Activated CD4-positive, alpha-beta memory T cell treated with anti-CD3 and anti-CD28 coated beads, Interleukin-2, amount 10 ng/mL, durations not matched to agents 7 days and 5 days (primary cell): ENCODE measurements at regions of chr19 and their contacts with region 1.

Region 1: DNA sequence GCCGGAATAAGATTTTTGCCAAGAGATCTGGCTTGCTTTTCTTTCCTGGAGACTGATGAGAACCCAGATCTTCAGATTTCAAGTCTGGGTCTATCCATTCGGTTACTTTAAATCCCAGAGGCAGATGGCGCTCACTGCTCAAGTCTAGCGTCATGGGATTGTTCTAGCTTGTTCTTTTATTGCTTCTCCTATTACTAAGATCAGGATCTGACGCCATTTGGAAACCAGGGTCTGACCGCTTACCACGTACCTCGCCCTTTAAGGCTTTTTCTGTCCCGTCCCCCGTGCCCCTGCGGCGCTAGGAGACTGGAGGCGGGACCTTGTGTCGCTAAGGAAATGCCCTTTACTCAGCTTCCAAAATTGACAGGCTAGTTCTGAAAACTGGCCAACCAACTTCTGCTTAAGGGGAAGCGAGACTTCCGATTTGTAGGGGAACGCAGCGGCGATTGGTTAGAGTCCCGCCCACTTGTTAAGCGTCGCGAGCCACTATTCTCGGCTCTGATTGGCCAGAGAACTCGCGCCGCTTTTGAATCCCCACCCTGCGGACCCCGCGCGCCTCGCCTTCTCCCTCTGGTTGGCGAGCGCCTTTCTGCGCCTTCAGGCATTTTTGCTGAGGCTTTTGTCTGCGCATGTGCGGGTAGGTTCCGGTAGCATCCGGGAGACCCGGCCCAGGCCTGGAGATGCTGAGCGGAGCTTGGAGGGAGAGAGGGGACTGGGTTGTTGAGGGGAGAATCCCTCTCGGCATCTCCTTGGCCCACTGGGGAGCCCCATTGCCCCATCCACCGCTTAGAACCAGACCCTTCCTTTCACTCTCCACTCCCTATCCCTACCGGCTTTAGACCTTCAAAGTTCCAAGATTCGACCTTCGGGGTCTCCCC is 3.8 kb upstream of the C19orf84 start:
- DNase-seq: peak; percentile 98
- H3K4me3 Mint-ChIP-seq: peak overlapping the region; percentile 86
- H3K27ac Mint-ChIP-seq: peak overlapping the region; percentile 98
- H3K4me1 Mint-ChIP-seq: peaks cover 54% of the 10 kb centered on the region
- H3K27me3 Mint-ChIP-seq: no peaks in the 10 kb centered on the region

Region 2: DNA sequence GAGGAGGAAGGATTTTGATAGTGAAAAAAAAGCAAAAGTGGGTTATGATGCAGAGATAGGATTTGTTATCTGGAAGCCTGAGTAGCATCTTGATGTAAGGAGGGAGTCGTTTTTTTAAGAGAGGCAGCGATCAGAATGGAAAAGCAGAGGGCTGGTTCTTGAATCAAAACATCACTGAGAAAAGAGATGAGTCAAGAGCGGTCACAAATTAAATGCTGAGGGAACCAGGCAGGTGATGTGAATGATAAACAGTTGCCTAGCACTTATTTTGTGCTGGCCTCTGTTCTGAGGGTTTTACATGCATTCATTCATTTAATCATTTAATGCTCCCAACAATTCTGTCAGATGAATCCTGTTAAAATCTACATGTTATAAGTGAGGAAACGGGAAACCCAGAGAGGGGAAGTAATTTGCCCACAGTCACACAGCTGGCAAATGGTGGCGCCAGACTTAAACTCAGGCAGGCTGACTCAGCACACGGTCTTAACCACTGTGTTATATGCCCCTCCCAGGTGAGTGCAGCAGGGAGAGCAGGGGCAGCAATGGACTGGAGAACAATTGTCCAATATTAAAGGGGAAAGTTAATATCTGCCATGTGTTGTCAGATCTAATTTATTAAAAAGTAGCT is 121.9 kb before region 1 on chr19:
- CTCF ChIA-PET with region 1: no interaction called
- POLR2A ChIA-PET with region 1: interaction called, 21 read pairs
- DNase-seq: peak; percentile 79
- H3K4me3 Mint-ChIP-seq: peak overlapping the region; percentile 62
- H3K27ac Mint-ChIP-seq: peak overlapping the region; percentile 97
- H3K4me1 Mint-ChIP-seq: peaks cover 46% of the 10 kb centered on the region
- H3K27me3 Mint-ChIP-seq: peaks cover 5% of the 10 kb centered on the region

Region 3: DNA sequence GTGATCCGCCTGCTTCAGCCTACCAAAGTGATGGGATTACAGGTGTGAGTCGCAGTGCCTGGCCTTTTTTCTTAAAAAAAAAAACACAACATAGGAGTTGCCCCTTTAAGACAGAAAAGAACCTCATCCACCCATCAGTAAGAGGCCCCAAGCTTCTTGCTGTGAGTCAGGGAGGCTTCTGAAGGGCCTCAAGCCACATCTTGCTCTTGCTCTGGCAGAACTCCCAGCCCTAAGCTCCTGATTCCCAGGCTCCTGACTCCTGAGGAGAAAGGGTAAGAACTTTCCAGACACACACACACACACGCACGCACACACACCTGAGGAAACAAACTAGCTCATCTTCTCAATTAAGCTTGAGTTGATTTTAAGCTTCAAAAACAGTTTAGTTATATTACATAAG is 34.9 kb before region 1 on chr19:
- CTCF ChIA-PET with region 1: no interaction called
- POLR2A ChIA-PET with region 1: interaction called, 35 read pairs
- DNase-seq: no peak
- H3K4me3 Mint-ChIP-seq: no peak overlapping the region
- H3K27ac Mint-ChIP-seq: no peak overlapping the region
- H3K4me1 Mint-ChIP-seq: peaks cover 59% of the 10 kb centered on the region
- H3K27me3 Mint-ChIP-seq: no peaks in the 10 kb centered on the region

Region 4: DNA sequence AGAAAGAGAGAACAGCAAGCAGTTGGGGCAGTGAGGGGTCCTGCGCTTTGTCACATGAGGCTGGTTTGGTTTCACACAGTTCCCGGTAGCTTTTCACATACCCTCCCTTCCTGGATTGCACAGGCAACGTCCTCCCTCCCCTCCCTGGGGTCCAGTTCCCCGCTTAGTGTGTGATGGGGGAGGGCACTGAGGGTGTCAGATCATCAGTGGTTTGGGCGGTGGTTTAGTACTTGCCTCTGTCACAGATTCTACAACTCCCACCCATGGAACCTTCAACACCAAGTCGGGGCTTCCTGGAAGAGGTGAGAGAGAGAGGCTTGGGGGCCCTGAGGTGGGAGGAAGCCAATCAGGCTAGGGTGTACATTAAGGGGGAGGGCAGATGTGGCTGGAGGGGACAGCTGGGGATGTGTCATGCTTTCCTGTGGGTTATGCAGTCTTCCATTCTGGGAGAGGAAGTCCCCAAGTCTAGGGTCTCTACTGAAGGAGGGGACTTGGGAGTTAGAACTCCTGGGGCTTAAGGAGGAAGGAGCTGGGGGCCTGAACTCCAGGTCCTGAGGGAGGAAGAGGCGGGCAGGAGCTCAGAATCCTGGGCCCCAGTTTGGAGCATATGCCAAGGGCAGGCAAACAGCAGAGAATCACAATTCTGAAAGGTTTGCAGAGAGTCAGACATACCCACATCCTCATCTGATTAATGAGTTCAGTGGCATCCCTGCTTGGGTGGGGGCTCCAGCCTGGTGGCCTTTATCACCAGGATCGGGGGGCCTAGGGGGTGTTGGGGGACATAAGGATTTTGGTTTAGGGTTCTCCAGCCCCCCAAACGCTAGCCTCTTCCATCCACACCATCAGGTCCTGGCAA is 21.3 kb before region 1 on chr19 and contains the start of gene NKG7:
- CTCF ChIA-PET with region 1: interaction called, 16 read pairs
- POLR2A ChIA-PET with region 1: interaction called, 207 read pairs
- DNase-seq: peak; percentile 87
- H3K4me3 Mint-ChIP-seq: peak within 1 kb of the TSS; percentile 95
- H3K27ac Mint-ChIP-seq: peak within 1 kb of the TSS; percentile 100
- H3K4me1 Mint-ChIP-seq: peaks cover 83% of the 10 kb centered on the region
- H3K27me3 Mint-ChIP-seq: no peaks in the 10 kb centered on the region
- total RNA-seq, gene NKG7: 417 to 428 TPM

Region 5: DNA sequence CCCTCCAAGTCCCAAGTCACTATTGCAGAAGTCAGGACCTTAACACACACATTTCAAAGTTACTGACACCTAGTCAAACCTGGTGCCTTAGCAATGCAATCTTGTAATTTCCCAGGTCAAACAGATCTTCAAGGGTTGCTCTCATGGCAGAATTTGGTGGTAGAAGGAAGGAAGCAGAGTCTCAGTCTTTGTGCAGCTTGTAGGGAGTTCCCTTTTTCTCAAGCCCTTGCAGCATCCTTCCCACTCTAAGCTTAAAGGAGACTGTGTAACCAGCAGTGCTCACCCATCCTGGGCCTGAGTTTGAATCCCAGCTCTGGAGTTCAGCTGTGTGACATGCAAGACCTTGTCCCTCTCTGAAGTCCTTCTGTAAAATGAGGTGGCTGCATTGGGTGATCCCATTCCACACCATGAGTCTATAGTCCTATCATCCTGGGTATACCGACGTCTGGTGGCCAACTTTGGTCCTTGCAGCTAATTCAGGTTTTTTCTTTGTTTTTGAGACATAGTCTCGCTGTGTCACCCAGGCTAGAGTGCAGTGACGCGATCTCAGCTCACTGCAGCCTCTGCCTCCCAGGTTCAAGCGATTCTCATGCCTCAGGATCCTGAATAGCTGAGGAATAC is 13.4 kb after region 1 on chr19:
- CTCF ChIA-PET with region 1: interaction called, 15 read pairs
- POLR2A ChIA-PET with region 1: interaction called, 7 read pairs
- DNase-seq: peak; percentile 51
- H3K4me3 Mint-ChIP-seq: no peak overlapping the region
- H3K27ac Mint-ChIP-seq: no peak overlapping the region
- H3K4me1 Mint-ChIP-seq: peaks cover 8% of the 10 kb centered on the region
- H3K27me3 Mint-ChIP-seq: no peaks in the 10 kb centered on the region

Region 6: DNA sequence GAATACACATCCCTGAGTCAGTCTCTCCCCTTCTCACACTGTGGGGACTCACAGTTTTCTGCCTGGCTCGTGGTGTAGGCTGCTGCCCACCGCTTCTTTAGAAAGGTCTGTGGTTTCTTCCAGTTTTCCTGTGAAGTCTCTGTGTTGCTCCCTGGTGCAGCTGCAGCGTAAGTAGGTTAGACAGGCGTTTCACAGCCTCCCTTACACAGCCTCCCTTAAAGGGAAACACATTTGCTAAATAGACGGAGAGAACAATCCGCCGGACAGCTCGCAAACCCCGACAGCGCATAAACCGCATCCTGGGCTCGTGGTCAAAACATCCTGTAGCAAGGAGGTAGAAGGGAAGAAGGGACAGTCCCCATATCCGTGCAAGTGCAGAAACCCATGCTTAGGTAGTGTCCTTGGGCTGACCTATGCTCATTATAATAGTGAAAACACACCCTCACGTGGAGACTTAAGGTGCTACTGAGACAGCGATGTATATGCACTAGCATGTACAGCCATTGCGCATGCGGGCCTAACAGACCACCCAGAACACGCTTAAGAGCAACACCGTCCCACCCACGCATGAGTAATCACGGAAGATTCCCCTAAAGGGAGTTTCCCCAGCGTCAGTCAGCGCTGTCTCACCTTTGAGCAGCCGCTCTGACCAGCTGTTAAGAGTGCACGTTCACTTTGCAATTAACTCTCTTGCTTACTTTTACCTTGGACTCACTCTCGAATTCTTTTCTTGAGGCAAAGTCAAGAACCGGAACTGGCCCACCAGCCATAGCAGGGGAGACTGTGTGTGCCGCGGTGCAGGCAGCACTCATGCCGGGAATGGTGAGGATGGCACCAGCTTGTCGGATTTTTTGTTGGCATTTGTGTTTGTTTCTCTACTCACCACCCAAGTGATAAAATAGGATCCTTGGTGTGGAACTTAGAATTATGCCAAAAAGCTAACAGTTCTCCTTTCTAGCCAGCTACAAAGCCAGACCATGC is 47.5 kb after region 1 on chr19:
- CTCF ChIA-PET with region 1: interaction called, 11 read pairs
- POLR2A ChIA-PET with region 1: interaction called, 24 read pairs
- DNase-seq: peak; percentile 95
- H3K4me3 Mint-ChIP-seq: peak overlapping the region; percentile 72
- H3K27ac Mint-ChIP-seq: peak overlapping the region; percentile 77
- H3K4me1 Mint-ChIP-seq: peaks cover 47% of the 10 kb centered on the region
- H3K27me3 Mint-ChIP-seq: peaks cover 29% of the 10 kb centered on the region